ENCODE measurements at regions of chr12 and their contacts with region 1.

Region 1: GRCh38 chr12:94603434-94604365 is 46.7 kb downstream of the TMCC3 start:
- DNase-seq: peak; percentile 66
- H3K4me3 Mint-ChIP-seq: no peak overlapping the region
- H3K27ac Mint-ChIP-seq: no peak overlapping the region
- H3K4me1 Mint-ChIP-seq: no peaks in the 10 kb centered on the region
- H3K27me3 Mint-ChIP-seq: peaks cover 9% of the 10 kb centered on the region

Region 2: DNA sequence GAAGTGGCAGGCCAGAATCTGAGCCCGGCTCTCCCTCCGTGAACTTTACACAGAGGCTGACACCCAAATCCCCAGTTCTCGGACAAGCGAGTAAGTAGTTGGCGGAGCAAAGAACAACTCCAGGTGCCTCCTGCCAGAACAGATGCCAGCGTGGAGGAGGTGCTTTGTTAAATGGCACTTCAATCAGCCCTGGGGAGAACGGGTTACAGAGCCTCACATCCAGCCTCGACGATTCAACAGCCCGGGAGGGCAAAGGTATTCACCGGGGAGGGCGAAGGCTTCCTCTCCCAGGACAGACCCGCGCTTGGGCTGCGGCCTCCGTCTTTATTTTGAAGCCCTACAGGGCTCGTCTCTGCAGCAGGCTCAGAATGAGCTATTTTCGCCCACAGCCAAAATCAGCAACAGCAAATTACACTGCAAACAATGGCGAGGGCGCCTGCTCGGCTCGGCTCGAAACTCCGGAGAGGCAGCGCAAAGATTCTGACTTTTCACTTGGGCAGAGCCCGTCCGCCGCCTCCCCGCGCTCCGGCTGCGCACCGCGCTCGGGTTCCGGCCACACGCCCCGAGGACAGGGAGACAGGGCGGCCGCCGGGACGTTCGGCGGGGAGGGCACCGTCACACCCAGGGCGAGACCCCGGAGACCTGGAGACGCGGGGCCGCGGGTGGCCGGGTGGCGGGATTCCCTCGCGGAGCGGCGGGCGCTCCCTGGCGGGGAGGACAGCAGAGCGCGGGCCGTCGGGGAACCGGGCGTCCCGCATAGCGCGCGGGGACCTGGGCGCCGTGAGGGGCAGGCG is 45.8 kb after region 1 on chr12:
- CTCF ChIA-PET with region 1: interaction called, 3 read pairs
- intact Hi-C with region 1: loop called (anchors 1 kb)
- DNase-seq: peak; percentile 14
- H3K4me3 Mint-ChIP-seq: peak overlapping the region; percentile 65
- H3K27ac Mint-ChIP-seq: no peak overlapping the region
- H3K4me1 Mint-ChIP-seq: peaks cover 8% of the 10 kb centered on the region
- H3K27me3 Mint-ChIP-seq: peaks cover 54% of the 10 kb centered on the region

Region 3: DNA sequence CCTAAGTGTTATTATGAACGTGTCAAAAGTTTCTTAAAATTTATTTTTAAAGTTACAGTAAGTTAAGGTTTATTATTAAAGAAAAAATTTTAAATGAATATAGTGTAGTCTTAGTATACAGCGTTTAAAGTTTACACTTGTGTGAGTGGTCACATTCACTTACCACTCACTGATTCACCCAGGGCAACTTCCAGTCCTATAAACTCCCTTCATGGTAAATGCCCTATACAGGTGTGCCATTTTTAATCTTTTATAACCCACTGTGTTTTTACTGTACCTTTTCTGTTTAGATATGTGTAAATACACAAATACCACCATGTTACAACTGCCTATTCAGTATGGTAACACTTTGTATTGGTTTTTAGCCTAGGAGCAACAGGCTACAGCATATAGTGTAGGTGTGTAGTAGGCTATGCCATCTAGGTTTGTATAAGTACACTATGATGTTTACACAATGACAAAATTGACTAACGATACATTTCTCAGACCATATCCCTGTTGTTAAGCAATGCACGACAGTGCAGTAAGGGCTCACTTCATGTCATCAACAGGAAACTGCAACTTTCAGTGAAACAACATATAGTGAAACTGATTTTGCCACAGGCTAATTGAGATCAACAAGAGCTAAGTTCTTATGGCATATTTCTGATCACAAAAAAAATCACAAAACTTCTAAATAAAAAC is 158.7 kb after region 1 on chr12:
- CTCF ChIA-PET with region 1: interaction called, 5 read pairs
- intact Hi-C with region 1: loop called (anchors 1 kb)
- DNase-seq: no peak
- H3K4me3 Mint-ChIP-seq: no peak overlapping the region
- H3K27ac Mint-ChIP-seq: no peak overlapping the region
- H3K4me1 Mint-ChIP-seq: peaks cover 2% of the 10 kb centered on the region
- H3K27me3 Mint-ChIP-seq: no peaks in the 10 kb centered on the region

Region 4: GRCh38 chr12:94980577-94980976 is 376.9 kb after region 1 on chr12:
- CTCF ChIA-PET with region 1: interaction called, 3 read pairs
- intact Hi-C with region 1: loop called (anchors 2 kb)
- DNase-seq: no peak
- H3K4me3 Mint-ChIP-seq: no peak overlapping the region
- H3K27ac Mint-ChIP-seq: no peak overlapping the region
- H3K4me1 Mint-ChIP-seq: peaks cover 47% of the 10 kb centered on the region
- H3K27me3 Mint-ChIP-seq: no peaks in the 10 kb centered on the region

Measured in activated naive CD4-positive, alpha-beta T cell treated with anti-CD3 and anti-CD28 coated beads for 36 hours (primary cell).